A673 (cell line): ENCODE measurements at regions of chr7 and their contacts with region 1.

Region 1: DNA sequence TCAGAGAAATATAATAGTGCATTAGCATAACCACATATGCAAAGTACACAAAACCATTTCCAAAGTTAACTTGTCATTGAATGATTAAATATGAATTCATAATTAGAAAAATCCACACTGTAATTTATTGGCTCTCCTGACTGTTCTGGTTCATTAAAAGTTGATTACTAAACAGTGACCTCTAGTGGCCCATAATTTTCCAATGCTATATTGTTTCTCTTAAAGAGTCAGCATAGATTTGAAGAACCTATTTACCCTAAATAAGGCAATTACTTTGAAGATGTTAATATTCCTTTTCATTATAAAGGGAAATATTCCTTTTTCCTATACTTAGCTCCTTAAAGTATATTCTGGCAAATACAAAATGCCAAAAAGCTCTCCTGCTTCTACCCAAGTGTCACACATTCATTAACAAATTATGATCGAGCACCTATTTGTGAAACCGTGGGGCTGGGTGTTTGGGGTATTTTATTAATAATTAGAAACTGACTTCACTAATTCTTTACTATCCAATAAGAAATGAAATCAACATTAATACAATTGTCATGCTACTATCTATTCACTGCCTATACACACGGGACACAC is 86.2 kb downstream of the HIBADH start:
- DNase-seq: peak; percentile 45
- H3K4me3 ChIP-seq: no peak overlapping the region
- H3K27ac ChIP-seq: no peak overlapping the region
- H3K4me1 ChIP-seq: no peaks in the 10 kb centered on the region
- H3K27me3 ChIP-seq: no peaks in the 10 kb centered on the region
- CTCF ChIP-seq: peak; percentile 69

Region 2: DNA sequence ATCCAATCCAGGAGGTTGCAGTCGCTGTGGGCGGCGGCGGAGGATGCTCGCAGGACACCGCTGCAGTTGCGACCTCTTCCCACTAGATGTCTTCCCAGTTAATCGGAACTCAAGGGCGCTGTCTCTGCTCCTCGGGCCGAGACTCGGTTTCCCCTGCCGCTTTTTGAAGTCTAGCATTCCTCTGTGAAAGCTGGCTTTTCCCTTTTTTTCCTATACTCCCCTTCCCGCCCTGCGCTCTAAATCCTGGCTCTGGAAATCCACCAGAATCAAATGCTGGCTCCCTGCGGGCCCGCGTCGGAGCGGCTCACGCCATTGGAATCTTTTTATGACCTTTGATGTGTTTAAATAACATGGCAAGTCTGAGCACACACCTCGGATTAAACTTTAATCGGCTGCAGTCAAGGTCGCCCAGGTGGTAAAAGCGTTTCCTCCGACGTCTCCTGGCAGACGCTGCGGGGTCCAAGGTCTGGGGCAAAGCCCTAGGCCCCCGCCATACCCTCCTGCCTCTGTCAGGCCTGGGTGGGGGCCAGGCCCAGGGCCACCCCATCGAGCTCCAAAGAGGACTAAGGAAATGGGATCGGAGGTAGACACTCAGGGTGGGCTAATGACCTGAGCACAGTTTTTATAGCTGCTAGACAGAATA is 365.9 kb before region 1 on chr7:
- CTCF ChIA-PET with region 1: interaction called, 3 read pairs
- POLR2A ChIA-PET with region 1: no interaction called
- intact Hi-C with region 1: loop called (anchors 5 kb)
- DNase-seq: peak; percentile 35
- H3K4me3 ChIP-seq: no peak overlapping the region
- H3K27ac ChIP-seq: no peak overlapping the region
- H3K4me1 ChIP-seq: no peaks in the 10 kb centered on the region
- H3K27me3 ChIP-seq: peaks cover 68% of the 10 kb centered on the region
- CTCF ChIP-seq: peak; percentile 74

Region 3: DNA sequence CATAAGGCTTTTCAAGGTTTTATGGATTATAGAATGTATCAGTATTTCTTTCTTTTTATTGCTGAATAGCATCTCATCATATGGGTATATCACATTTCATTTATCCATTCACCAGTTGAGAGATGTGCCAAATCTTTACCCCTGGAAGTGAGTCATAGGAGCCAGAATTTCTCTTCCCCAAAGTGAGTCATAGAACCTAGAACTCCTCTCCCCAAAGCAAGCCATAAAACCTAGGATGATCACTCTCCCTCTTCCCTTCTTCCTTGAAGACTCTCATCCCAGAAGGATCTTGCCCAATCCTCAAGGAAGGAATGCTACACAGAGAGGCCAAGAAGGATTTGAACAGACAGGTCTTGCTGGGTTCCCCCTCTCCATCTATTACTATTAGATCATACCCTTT is 134.0 kb before region 1 on chr7:
- CTCF ChIA-PET with region 1: no interaction called
- POLR2A ChIA-PET with region 1: no interaction called
- intact Hi-C with region 1: no loop called
- DNase-seq: peak; percentile 5
- H3K4me3 ChIP-seq: no peak overlapping the region
- H3K27ac ChIP-seq: no peak overlapping the region
- H3K4me1 ChIP-seq: no peaks in the 10 kb centered on the region
- H3K27me3 ChIP-seq: peaks cover 31% of the 10 kb centered on the region
- CTCF ChIP-seq: no peak

Region 4: DNA sequence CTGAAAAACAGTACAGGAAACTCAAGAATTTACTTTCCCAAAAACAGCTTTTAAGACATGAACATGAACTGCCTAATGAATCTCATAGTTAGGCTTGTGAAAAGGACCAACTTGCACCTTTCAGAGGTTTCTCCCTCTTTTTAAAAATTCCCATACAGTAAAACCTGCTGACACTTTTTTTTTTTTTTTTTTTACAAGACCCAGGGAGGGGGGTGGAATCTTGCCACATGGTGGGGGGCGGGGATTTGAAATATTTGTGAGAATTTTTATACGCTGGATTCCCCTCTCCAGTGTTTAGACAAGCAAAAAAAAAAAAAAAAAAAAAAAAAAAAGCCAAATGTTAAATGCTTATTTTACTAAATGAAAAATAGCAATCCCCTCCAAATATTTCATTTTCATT is 28.8 kb after region 1 on chr7:
- CTCF ChIA-PET with region 1: interaction called, 11 read pairs
- POLR2A ChIA-PET with region 1: no interaction called
- intact Hi-C with region 1: no loop called
- DNase-seq: no peak
- H3K4me3 ChIP-seq: no peak overlapping the region
- H3K27ac ChIP-seq: no peak overlapping the region
- H3K4me1 ChIP-seq: no peaks in the 10 kb centered on the region
- H3K27me3 ChIP-seq: no peaks in the 10 kb centered on the region
- CTCF ChIP-seq: no peak

Region 5: GRCh38 chr7:27921081-27921836 is 344.8 kb after region 1 on chr7:
- CTCF ChIA-PET with region 1: no interaction called
- POLR2A ChIA-PET with region 1: no interaction called
- intact Hi-C with region 1: loop called (anchors 10 kb)
- DNase-seq: peak; percentile 83
- H3K4me3 ChIP-seq: no peak overlapping the region
- H3K27ac ChIP-seq: no peak overlapping the region
- H3K4me1 ChIP-seq: peaks cover 3% of the 10 kb centered on the region
- H3K27me3 ChIP-seq: peaks cover 78% of the 10 kb centered on the region
- CTCF ChIP-seq: peak; percentile 72

Region 6: DNA sequence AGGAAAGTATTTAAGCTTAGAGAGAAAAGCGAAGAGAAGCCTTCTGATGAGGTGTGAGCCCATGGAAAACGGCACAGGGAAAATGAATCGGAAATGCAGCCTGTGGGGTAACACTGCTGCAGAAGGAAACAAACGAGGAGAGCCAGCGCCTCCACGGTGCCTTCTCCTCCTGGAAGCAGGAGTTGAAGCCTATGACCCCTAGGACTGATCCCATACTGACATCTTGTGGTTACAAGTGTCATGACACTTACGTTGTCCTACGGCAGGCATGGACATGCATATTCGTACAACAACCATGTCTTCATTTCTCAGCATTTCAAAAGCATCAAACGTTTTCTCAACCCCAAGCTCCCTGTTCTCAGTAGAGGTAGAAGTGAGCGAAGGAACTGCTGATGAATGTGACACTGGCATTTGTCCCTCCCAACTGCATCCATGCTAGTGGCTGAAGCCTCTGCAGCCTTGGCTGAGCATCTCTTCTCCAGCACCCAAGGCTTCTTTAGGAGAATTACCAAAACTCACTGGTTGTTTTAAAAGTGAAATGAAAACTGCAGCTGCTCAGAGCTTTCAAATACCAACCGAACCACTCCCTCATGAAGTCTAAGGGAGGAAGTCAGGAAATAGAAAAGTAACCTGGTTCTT is 444.0 kb after region 1 on chr7:
- CTCF ChIA-PET with region 1: no interaction called
- POLR2A ChIA-PET with region 1: no interaction called
- intact Hi-C with region 1: loop called (anchors 10 kb)
- DNase-seq: peak; percentile 80
- H3K4me3 ChIP-seq: no peak overlapping the region
- H3K27ac ChIP-seq: no peak overlapping the region
- H3K4me1 ChIP-seq: no peaks in the 10 kb centered on the region
- H3K27me3 ChIP-seq: peaks cover 73% of the 10 kb centered on the region
- CTCF ChIP-seq: peak; percentile 72